Sciatic nerve (tissue), 2 donors: ENCODE measurements at regions of chr5 and their contacts with region 1.

Region 1: GRCh38 chr5:119527351-119527750 is 75.1 kb downstream of the HSD17B4 start:
- DNase-seq: no peak
- ATAC-seq: no peak

Region 2: GRCh38 chr5:119541716-119542115 is 14.4 kb after region 1 on chr5:
- intact Hi-C with region 1: loop called (anchors 1 kb)
- DNase-seq: no peak
- ATAC-seq: no peak

Region 3: DNA sequence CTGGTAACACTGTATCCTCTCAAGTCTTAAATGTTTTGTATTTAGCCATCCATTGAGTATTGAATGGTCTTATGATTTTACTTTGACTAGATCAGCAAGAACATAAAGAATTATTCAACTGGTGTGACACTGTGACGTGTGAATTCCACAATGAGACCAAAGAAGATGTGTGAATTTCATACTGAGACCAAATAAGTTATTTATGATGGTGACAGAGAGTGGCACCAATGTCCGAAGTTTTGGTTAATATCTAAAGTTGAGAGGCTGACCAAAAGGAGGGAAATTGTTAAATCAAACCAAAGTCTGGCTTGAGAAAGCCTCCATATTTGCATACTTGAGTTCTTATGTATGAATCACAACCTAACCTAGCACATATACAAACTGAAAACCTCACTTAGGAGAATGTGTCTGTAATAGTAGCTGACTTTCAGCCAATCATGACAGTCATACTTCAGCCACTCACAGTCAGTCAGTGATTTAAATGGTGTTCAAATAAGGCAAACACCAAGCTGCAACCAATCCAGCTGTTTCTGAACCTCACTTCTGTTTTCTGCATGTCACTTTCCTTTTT is 70.5 kb after region 1 on chr5:
- intact Hi-C with region 1: no loop called
- DNase-seq: no peak
- ATAC-seq: no peak